ENCODE measurements at regions of chr13 and their contacts with region 1.

Region 1: GRCh38 chr13:64782466-64782865 is 2447.7 kb downstream of the PCDH9 start:
- DNase-seq: no peak
- H3K4me3 ChIP-seq: no peak overlapping the region
- H3K27ac ChIP-seq: no peak overlapping the region
- H3K4me1 ChIP-seq: no peaks in the 10 kb centered on the region
- H3K27me3 ChIP-seq: no peaks in the 10 kb centered on the region
- CTCF ChIP-seq: no peak
- EP300 ChIP-seq: no peak
- POLR2A ChIP-seq: no peak

Region 2: DNA sequence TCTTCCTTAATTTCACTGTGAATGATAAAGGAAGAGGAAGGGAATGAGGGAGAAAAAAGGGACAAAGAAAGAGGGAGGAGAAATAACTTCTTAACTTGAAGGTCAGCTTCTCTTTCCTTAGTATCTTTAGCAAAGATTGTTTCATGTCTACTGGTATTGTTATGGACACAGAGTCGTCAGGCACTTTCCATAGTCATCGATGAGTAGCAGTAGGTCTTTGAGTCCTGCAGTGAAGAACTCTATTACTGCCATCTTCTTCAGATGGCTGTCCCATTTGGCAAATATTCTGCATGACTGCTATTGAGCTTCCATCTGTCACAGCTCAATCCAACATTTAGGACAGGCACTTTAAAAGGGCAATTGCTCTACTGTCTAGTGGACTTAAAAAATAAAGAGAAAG is 15.4 kb before region 1 on chr13:
- in situ Hi-C with region 1: no loop called
- intact Hi-C with region 1: loop called (anchors 1 kb)
- DNase-seq: no peak
- H3K4me3 ChIP-seq: no peak overlapping the region
- H3K27ac ChIP-seq: no peak overlapping the region
- H3K4me1 ChIP-seq: no peaks in the 10 kb centered on the region
- H3K27me3 ChIP-seq: no peaks in the 10 kb centered on the region
- CTCF ChIP-seq: no peak
- EP300 ChIP-seq: no peak
- POLR2A ChIP-seq: no peak